CD8-positive, alpha-beta memory T cell (primary cell): ENCODE measurements at regions of chr9 and their contacts with region 1.

Region 1: DNA sequence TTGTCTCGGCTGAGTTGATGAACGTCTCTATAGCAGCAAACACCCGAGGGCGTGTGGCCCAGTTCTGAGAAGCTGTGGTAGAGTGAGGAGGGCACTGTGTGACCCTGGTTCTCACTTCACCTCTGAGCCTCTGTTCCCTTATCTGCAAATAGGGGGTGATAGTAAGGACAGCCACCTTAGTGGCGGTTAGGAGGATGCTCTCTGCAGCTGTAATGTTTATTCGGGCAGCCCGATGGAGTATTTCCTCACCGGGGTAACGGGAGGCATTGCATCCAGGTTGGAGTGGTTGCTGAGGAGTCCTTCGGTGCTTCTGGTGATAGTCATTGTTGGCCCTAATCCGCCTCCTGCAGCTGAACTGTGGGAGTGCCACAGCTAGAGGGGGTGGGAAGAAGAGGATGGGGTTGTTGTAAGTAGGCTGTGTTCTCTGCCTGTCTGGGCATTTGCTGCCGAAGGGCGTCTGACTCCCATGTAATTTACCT is 13.9 kb downstream of the PRRC2B start:
- DNase-seq: peak; percentile 37 to 75 (median 68)
- H3K4me3 ChIP-seq: peak overlapping the region; percentile 33
- H3K4me3 Mint-ChIP-seq: peak overlapping the region; percentile 68 to 92 (median 84)
- H3K27ac ChIP-seq: peak overlapping the region; percentile 64
- H3K27ac Mint-ChIP-seq: peak overlapping the region; percentile 64 to 97 (median 94)
- H3K4me1 ChIP-seq: peaks cover 94% of the 10 kb centered on the region
- H3K4me1 Mint-ChIP-seq: peaks cover 79 to 95% (median 92%) of the 10 kb centered on the region in 3 donors
- H3K27me3 ChIP-seq: no peaks in the 10 kb centered on the region
- H3K27me3 Mint-ChIP-seq: no peaks in the 10 kb centered on the region

Region 2: GRCh38 chr9:131129183-131129582 is 278.6 kb before region 1 on chr9:
- CTCF ChIA-PET with region 1: no interaction called
- POLR2A ChIA-PET with region 1: interaction called, 11 read pairs
- DNase-seq: no peak
- H3K4me3 ChIP-seq: no peak overlapping the region
- H3K4me3 Mint-ChIP-seq: no peak overlapping the region
- H3K27ac ChIP-seq: no peak overlapping the region
- H3K27ac Mint-ChIP-seq: peak overlapping the region in 2 of 8 donors; percentile 59 to 66
- H3K4me1 ChIP-seq: peaks cover 12% of the 10 kb centered on the region
- H3K4me1 Mint-ChIP-seq: peaks cover 31 to 49% (median 41%) of the 10 kb centered on the region in 3 donors
- H3K27me3 ChIP-seq: no peaks in the 10 kb centered on the region
- H3K27me3 Mint-ChIP-seq: no peaks in the 10 kb centered on the region

Region 3: DNA sequence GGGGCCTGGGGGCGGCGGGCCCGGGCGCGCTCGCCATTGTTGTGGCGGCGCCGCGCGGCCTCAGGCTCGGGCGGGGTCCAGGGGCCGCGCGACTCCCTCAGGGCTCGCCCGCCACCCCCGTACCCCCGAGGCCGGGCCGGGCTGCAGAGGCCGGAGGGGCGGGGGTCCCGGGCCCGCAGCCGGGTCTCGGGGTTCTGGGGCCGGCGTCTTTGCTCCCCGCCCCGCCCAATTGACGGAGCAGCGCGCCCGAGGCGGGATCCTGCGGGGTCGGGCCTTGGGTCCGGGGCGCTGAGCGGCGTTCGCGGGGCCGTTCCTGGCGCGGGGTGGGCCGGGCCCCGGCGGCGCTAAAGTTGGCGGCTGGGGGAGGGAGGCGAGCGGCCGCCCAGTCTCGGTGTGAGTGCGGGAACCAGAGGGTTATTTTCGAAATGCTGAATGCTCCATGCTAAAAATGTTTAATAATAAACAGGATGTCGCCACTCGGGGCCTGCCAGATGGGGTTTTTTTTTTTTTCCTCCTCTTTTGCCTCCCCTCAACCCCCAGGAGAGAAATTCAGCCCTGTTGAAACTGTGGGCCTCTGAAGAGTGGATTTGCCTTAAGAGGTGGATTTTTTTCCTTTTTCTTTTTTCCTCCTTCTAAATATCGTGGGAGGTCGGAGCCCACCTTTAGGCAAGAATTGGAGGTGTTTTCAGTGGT is 13.1 kb before region 1 on chr9:
- CTCF ChIA-PET with region 1: interaction called, 21 read pairs
- POLR2A ChIA-PET with region 1: interaction called, 23 read pairs
- DNase-seq: peak; percentile 40 to 73 (median 60)
- H3K4me3 ChIP-seq: peak overlapping the region; percentile 75
- H3K4me3 Mint-ChIP-seq: peak overlapping the region; percentile 82 to 97 (median 92)
- H3K27ac ChIP-seq: peak overlapping the region; percentile 82
- H3K27ac Mint-ChIP-seq: peak overlapping the region; percentile 90 to 99 (median 96)
- H3K4me1 ChIP-seq: peaks cover 48% of the 10 kb centered on the region
- H3K4me1 Mint-ChIP-seq: peaks cover 50 to 53% (median 53%) of the 10 kb centered on the region in 3 donors
- H3K27me3 ChIP-seq: no peaks in the 10 kb centered on the region
- H3K27me3 Mint-ChIP-seq: peaks cover 0 to 7% of the 10 kb centered on the region in 2 donors

Region 4: DNA sequence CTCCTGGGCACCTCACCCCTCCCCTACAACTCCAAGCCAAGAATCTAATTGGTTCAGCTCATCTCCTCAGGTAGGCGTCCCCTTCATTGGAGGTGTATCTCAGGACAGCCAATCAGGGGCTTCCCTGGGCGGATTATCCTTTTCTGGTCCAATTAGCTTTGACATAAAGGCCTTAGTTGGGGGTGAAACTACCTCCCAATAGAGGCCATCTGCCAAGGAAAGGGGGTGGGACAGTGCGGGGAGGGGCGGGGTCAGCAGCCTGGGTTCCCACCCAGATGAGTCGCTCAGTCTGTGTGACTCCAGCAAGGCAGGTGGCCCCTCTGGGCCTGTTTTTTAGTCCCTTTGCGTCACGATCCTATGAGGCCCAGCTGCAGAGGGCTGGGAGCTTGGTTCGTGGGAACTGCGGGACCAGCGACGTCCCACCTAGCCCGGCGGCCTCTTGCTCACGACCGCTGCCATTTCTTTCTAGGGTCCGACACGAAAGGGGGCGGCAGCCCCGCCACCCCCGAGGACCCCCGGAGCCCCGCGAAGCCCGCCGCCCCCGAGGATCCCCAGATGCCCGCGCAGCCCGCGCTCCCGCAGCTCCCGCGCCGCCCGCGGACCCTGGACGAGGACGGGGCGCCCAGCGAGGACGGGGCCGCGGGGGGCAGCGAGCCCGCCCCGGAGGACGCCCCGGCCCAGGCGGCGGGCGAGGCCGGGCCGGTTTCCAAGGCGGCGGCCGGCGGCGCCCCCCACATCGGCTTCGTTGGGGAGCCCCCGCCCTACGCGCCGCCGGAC is 146.5 kb after region 1 on chr9:
- CTCF ChIA-PET with region 1: no interaction called
- POLR2A ChIA-PET with region 1: no interaction called
- DNase-seq: no peak
- H3K4me3 ChIP-seq: no peak overlapping the region
- H3K4me3 Mint-ChIP-seq: peak overlapping the region in 1 of 7 donors; percentile 1
- H3K27ac ChIP-seq: no peak overlapping the region
- H3K27ac Mint-ChIP-seq: no peak overlapping the region
- H3K4me1 ChIP-seq: no peaks in the 10 kb centered on the region
- H3K4me1 Mint-ChIP-seq: peaks cover 0 to 4% (median 1%) of the 10 kb centered on the region in 3 donors
- H3K27me3 ChIP-seq: peaks cover 11% of the 10 kb centered on the region
- H3K27me3 Mint-ChIP-seq: peaks cover 35 to 49% of the 10 kb centered on the region in 2 donors